A549 (cell line): ENCODE measurements at regions of chr2 and their contacts with region 1.

Region 1: DNA sequence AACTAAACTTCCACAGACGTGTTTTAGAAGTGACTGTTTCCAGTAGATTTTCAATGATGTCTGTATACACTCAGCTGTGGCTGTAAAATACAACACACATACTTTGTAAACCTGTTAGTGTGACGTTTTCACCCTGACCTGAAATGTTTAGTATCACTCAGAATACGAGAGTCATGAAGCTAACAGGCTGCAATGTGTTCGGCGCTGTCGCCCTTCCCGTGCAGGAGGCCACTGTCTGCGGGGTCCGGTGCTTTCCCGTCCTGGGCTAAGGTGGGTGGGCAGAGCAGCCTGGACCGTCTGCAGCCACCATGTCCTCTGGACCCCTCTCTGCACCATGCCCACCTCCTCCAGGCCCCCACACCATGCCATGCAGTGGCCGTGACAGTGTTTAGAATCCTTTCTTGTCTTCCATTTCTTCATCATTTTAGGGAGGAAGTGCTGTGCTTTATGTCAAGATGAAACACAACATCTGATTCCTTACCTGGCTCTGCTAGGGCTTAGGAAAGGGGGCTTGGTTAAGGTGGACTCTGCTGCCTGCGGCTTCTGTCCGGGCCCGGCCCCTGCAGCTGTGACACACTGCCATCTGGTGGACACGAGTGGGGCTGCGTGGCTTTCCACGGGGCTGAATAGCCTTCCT is 53.8 kb upstream of the RBM44 start:
- DNase-seq: peak; percentile 67 to 76
- ATAC-seq: peak; percentile 85 to 92
- H3K4me3 ChIP-seq: no peak overlapping the region
- H3K27ac ChIP-seq: no peak overlapping the region
- H3K4me1 ChIP-seq: peaks cover 23% of the 10 kb centered on the region
- CTCF ChIP-seq: peak; percentile 96
- EP300 ChIP-seq: no peak
- POLR2A ChIP-seq: no peak
- RAD21 ChIP-seq: peak; percentile 97 to 98

Region 2: GRCh38 chr2:236417150-236417549 is 1327.6 kb before region 1 on chr2:
- CTCF ChIA-PET with region 1: no interaction called
- POLR2A ChIA-PET with region 1: no interaction called
- DNase-seq: no peak
- ATAC-seq: no peak
- H3K4me3 ChIP-seq: no peak overlapping the region
- H3K27ac ChIP-seq: no peak overlapping the region
- H3K4me1 ChIP-seq: no peaks in the 10 kb centered on the region
- CTCF ChIP-seq: no peak
- EP300 ChIP-seq: no peak
- POLR2A ChIP-seq: no peak
- RAD21 ChIP-seq: no peak

Region 3: GRCh38 chr2:237549643-237550415 is 194.9 kb before region 1 on chr2:
- CTCF ChIA-PET with region 1: no interaction called
- POLR2A ChIA-PET with region 1: no interaction called
- DNase-seq: no peak
- ATAC-seq: peak in 1 of 2 experiments; percentile 18; a peak in 2 of 6 replicates
- H3K4me3 ChIP-seq: no peak overlapping the region
- H3K27ac ChIP-seq: no peak overlapping the region
- H3K4me1 ChIP-seq: no peaks in the 10 kb centered on the region
- CTCF ChIP-seq: no peak
- EP300 ChIP-seq: no peak
- POLR2A ChIP-seq: no peak
- RAD21 ChIP-seq: no peak

Region 4: GRCh38 chr2:237665713-237666143 is 79.0 kb before region 1 on chr2:
- CTCF ChIA-PET with region 1: interaction called, 295 read pairs
- POLR2A ChIA-PET with region 1: no interaction called
- DNase-seq: no peak
- ATAC-seq: no peak
- H3K4me3 ChIP-seq: no peak overlapping the region
- H3K27ac ChIP-seq: no peak overlapping the region
- H3K4me1 ChIP-seq: peaks cover 10% of the 10 kb centered on the region; the same call in 2 of the 3 replicates
- CTCF ChIP-seq: no peak
- EP300 ChIP-seq: no peak
- POLR2A ChIP-seq: no peak
- RAD21 ChIP-seq: no peak

Region 5: DNA sequence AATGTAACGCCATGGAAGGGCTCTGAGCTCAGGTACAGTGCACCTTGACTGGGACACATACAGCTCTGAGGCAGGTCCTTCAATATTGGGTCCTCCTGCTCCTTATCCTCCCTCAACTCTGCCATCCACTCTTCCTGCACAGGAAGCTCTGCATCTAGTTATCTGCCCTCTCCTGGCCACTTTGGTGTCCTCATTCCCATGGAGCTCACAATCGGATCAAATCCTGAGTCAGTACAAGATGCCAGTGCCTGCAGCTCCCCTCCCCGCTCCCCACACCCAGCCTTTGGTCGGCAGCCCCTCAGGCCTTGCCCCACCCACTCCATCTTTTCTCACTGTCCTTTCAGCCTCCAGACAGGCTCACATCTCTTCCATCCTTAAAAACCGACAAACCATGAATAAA is 59.3 kb before region 1 on chr2:
- CTCF ChIA-PET with region 1: interaction called, 60 read pairs
- POLR2A ChIA-PET with region 1: no interaction called
- DNase-seq: peak in 1 of 2 experiments; percentile 66
- ATAC-seq: peak; percentile 75 to 83
- H3K4me3 ChIP-seq: no peak overlapping the region
- H3K27ac ChIP-seq: no peak overlapping the region
- H3K4me1 ChIP-seq: peaks cover 24% of the 10 kb centered on the region
- CTCF ChIP-seq: peak; percentile 34; the same call in 2 of the 3 replicates
- EP300 ChIP-seq: no peak
- POLR2A ChIP-seq: no peak
- RAD21 ChIP-seq: peak in 1 of 2 experiments; percentile 24; a peak in 1 of 5 replicates

Region 6: DNA sequence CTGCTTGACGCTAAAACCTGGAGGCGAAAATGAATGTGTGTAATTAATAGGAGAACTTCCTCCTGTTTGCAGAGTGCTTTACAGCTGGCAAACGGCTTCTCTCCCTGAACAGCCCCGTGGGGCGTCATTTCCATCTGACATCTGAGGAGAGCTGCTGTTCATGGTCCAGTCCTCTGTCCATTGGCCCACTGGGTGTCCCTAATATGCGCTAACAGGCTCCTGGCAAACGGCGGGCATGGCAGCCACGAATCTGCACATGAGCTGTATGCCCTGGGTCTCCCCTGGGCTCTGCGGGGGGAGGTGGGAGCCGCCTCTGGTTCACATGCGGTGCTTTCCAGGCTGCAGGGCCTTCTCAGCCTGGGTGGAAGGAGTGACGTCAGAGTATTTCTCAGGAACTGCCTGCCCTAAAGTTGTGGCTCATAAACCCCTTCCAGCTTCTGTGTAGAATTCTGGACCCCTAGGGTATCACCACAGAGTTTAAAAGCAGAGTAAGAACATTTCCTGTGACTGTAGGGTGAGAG is 44.2 kb before region 1 on chr2:
- CTCF ChIA-PET with region 1: interaction called, 20 read pairs
- POLR2A ChIA-PET with region 1: no interaction called
- DNase-seq: no peak
- ATAC-seq: no peak
- H3K4me3 ChIP-seq: no peak overlapping the region
- H3K27ac ChIP-seq: no peak overlapping the region
- H3K4me1 ChIP-seq: peaks cover 67% of the 10 kb centered on the region
- CTCF ChIP-seq: no peak
- EP300 ChIP-seq: no peak
- POLR2A ChIP-seq: no peak
- RAD21 ChIP-seq: no peak

Region 7: GRCh38 chr2:237723602-237724001 is 21.1 kb before region 1 on chr2:
- CTCF ChIA-PET with region 1: interaction called, 126 read pairs
- POLR2A ChIA-PET with region 1: no interaction called
- DNase-seq: peak; percentile 51 to 72
- ATAC-seq: peak; percentile 88 to 94
- H3K4me3 ChIP-seq: no peak overlapping the region
- H3K27ac ChIP-seq: peak overlapping the region in 1 of 2 experiments; percentile 39; a peak in 1 of 6 replicates
- H3K4me1 ChIP-seq: peaks cover 57% of the 10 kb centered on the region
- CTCF ChIP-seq: no peak
- EP300 ChIP-seq: no peak
- POLR2A ChIP-seq: no peak
- RAD21 ChIP-seq: 0 out of 5 replicates have a peak, but pooled peaks of 1 of the 2 experiments have one; percentile 6

Region 8: GRCh38 chr2:237759176-237759575 is 14.4 kb after region 1 on chr2:
- CTCF ChIA-PET with region 1: interaction called, 52 read pairs
- POLR2A ChIA-PET with region 1: no interaction called
- DNase-seq: no peak
- ATAC-seq: no peak
- H3K4me3 ChIP-seq: no peak overlapping the region
- H3K27ac ChIP-seq: no peak overlapping the region
- H3K4me1 ChIP-seq: no peaks in the 10 kb centered on the region
- CTCF ChIP-seq: no peak
- EP300 ChIP-seq: no peak
- POLR2A ChIP-seq: no peak
- RAD21 ChIP-seq: no peak